ENCODE measurements at regions of chr3 and their contacts with region 1.

Region 1: GRCh38 chr3:148389916-148390315 is 307.8 kb upstream of the AGTR1 start:
- DNase-seq: peak; percentile 43
- ATAC-seq: no peak
- H3K4me3 ChIP-seq: no peak overlapping the region
- H3K27ac ChIP-seq: no peak overlapping the region
- H3K4me1 ChIP-seq: no peaks in the 10 kb centered on the region
- H3K27me3 ChIP-seq: no peaks in the 10 kb centered on the region
- CTCF ChIP-seq: no peak
- POLR2A ChIP-seq: no peak
- RAD21 ChIP-seq: no peak

Region 2: DNA sequence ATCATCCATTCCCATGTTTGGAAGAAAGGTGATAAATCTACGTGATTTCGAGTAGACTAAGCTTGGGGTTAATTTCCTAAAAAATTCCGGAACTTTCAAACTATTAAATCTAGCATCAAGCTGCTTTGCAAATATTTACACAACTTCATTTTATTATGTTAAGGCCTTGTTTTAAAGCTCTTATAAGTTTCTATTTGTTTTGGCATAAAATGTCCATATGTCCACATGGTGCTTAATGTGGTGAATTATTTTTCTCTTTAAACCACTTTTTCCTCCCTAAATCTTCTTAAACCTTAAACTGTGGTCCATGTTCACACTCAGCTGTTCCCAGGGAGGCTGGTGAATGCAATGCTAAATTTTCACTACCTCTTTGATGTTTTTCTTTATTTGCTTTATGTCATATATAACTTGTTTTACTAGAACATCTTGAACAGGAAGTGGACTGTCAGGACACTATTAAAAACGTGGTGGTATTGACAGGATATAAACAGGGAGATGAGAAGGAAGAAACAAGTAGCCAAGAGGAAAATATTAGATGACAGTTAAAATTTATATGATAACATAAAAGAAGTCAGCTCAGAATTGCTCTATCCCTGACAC is 235.3 kb after region 1 on chr3:
- CTCF ChIA-PET with region 1: no interaction called
- POLR2A ChIA-PET with region 1: no interaction called
- dilution Hi-C with region 1: no loop called
- in situ Hi-C with region 1: no loop called
- intact Hi-C with region 1: loop called (anchors 10 kb)
- DNase-seq: no peak
- ATAC-seq: no peak
- H3K4me3 ChIP-seq: no peak overlapping the region
- H3K27ac ChIP-seq: no peak overlapping the region
- H3K4me1 ChIP-seq: no peaks in the 10 kb centered on the region
- H3K27me3 ChIP-seq: no peaks in the 10 kb centered on the region
- CTCF ChIP-seq: no peak
- POLR2A ChIP-seq: no peak
- RAD21 ChIP-seq: no peak

Region 3: DNA sequence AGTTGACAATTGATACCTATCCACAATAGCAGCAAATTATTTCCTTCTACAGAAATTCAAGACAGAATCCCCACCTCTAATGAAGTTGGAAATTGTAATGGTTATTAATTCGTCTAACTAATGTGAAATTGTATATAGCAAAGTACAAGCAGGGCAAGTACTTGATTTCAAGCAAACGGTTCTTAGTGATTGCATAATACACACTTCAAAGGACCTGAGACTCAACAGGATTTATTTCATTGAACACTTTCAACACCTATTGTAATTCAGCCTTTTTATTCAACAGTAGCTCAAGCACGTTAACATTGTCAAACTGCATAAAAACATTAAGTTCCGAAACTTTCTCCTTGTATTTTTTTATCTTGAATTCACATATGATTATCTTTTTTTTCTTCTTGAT is 267.6 kb after region 1 on chr3:
- CTCF ChIA-PET with region 1: no interaction called
- POLR2A ChIA-PET with region 1: no interaction called
- dilution Hi-C with region 1: no loop called
- in situ Hi-C with region 1: no loop called
- intact Hi-C with region 1: no loop called
- DNase-seq: no peak
- ATAC-seq: no peak
- H3K4me3 ChIP-seq: no peak overlapping the region
- H3K27ac ChIP-seq: no peak overlapping the region
- H3K4me1 ChIP-seq: no peaks in the 10 kb centered on the region
- H3K27me3 ChIP-seq: no peaks in the 10 kb centered on the region
- CTCF ChIP-seq: no peak
- POLR2A ChIP-seq: no peak
- RAD21 ChIP-seq: no peak

Region 4: GRCh38 chr3:148839805-148840204 is 449.9 kb after region 1 on chr3:
- CTCF ChIA-PET with region 1: no interaction called
- POLR2A ChIA-PET with region 1: no interaction called
- dilution Hi-C with region 1: no loop called
- in situ Hi-C with region 1: no loop called
- intact Hi-C with region 1: loop called (anchors 10 kb)
- DNase-seq: no peak
- ATAC-seq: no peak
- H3K4me3 ChIP-seq: no peak overlapping the region
- H3K27ac ChIP-seq: no peak overlapping the region
- H3K4me1 ChIP-seq: no peaks in the 10 kb centered on the region
- H3K27me3 ChIP-seq: peaks cover 3% of the 10 kb centered on the region; the same call in 1 of the 2 replicates
- CTCF ChIP-seq: no peak
- POLR2A ChIP-seq: no peak
- RAD21 ChIP-seq: no peak

Region 5: DNA sequence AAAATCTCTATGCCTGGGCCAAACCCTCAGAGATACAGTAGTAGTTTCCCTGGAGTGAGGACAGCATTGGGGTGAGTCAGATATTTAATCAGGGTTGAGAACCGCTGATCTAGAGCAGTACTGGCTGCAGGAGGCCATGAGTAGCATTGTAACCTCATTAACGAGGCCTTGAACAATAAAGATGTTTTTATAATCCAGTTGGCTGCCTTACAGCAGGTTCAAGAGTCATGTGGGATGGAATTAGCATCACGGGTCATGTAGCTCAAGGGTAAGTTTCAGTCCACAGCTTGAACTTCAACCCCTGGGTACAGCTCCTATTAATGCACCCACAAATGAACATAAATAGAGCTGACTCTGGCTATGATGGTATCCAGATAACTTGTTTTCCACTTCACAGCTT is 744.7 kb after region 1 on chr3:
- CTCF ChIA-PET with region 1: interaction called, 10 read pairs
- POLR2A ChIA-PET with region 1: no interaction called
- dilution Hi-C with region 1: no loop called
- in situ Hi-C with region 1: no loop called
- intact Hi-C with region 1: no loop called
- DNase-seq: peak; percentile 41
- ATAC-seq: peak; percentile 30; the same call in 1 of the 2 replicates
- H3K4me3 ChIP-seq: no peak overlapping the region
- H3K27ac ChIP-seq: no peak overlapping the region
- H3K4me1 ChIP-seq: peaks cover 10% of the 10 kb centered on the region
- H3K27me3 ChIP-seq: no peaks in the 10 kb centered on the region
- CTCF ChIP-seq: no peak
- POLR2A ChIP-seq: no peak
- RAD21 ChIP-seq: no peak

Measured in IMR-90 (cell line).